Endothelial cell of umbilical vein (primary cell): ENCODE measurements at regions of chr11 and their contacts with region 1.

Region 1: GRCh38 chr11:125902927-125903710 is at the start of gene PUS3:
- DNase-seq: peak; percentile 86
- H3K4me3 ChIP-seq: peak within 1 kb of the TSS; percentile 59 to 88 (median 85)
- H3K27ac ChIP-seq: peak within 1 kb of the TSS; percentile 48
- H3K4me1 ChIP-seq: peaks cover 8% of the 10 kb centered on the region
- H3K27me3 ChIP-seq: peaks cover 15 to 24% of the 10 kb centered on the region in 2 experiments
- CTCF ChIP-seq: no peak
- POLR2A ChIP-seq: peak; percentile 95
- total RNA-seq, gene PUS3: 10.3 and 15.1 TPM in 2 replicates

Region 2: DNA sequence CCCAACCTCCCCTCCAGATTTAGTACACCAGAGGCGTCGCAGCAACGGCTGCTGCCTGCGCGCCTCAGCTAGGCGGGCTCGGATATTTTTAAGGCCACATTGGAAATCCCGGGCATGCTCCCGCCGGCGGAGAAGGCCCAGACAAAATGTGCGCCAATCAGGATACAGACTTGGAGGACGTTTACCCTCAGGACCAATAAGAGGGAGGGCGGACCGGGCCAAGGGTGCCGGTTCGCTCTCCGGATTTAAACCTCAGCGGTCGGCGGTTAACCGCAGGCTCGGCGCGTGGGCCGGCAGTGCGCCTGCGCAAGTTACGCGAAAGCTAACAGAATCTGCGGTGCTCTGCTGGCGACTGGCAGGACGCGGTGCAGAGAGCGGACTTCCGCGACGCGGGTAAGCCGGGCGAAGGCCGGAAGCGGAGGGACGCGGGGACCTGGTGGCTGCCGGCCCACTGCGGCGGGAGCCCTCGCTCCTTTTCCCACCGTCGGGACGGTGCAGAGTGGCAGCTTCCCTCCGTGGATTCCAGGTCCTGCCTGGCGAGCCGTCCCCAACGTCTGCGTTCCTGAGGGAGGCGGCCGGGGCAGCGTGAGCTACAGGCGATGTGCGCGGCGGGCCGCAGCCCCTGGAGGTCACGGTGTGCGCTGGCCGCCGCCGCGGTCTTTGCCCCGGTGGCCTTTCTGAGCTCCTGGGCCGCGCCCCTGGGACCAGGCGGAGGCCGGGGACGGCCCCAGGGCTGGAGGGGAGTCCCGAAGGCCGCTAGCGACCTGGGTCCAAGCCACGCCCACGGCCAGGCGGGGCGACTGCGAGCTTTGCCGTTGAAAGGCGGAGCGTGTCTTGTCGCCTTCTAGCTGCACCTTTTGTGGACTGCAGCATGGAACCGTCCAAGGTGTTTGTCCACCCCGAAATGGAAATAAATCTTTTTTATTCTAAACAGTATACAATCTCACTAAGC is 15.5 kb before region 1 on chr11 and contains the start of gene HYLS1:
- CTCF ChIA-PET with region 1: interaction called, 18 read pairs
- POLR2A ChIA-PET with region 1: interaction called, 5 read pairs
- dilution Hi-C with region 1: no loop called
- intact Hi-C with region 1: loop called (anchors 1 kb)
- DNase-seq: peak; percentile 99
- H3K4me3 ChIP-seq: peak within 1 kb of the TSS; percentile 36 to 84 (median 73)
- H3K27ac ChIP-seq: peak within 1 kb of the TSS; percentile 76
- H3K4me1 ChIP-seq: peaks cover 30% of the 10 kb centered on the region
- H3K27me3 ChIP-seq: no peaks in the 10 kb centered on the region
- CTCF ChIP-seq: peak in 1 of 2 donors; percentile 22
- POLR2A ChIP-seq: peak; percentile 91
- total RNA-seq, gene HYLS1: 9.4 and 12.6 TPM in 2 replicates